Sciatic nerve (tissue), 2 donors: ENCODE measurements at regions of chr16 and their contacts with region 1.

Region 1: GRCh38 chr16:12497526-12497925 is 306.2 kb downstream of the CPPED1 start:
- DNase-seq: no peak
- ATAC-seq: peak; percentile 45

Region 2: DNA sequence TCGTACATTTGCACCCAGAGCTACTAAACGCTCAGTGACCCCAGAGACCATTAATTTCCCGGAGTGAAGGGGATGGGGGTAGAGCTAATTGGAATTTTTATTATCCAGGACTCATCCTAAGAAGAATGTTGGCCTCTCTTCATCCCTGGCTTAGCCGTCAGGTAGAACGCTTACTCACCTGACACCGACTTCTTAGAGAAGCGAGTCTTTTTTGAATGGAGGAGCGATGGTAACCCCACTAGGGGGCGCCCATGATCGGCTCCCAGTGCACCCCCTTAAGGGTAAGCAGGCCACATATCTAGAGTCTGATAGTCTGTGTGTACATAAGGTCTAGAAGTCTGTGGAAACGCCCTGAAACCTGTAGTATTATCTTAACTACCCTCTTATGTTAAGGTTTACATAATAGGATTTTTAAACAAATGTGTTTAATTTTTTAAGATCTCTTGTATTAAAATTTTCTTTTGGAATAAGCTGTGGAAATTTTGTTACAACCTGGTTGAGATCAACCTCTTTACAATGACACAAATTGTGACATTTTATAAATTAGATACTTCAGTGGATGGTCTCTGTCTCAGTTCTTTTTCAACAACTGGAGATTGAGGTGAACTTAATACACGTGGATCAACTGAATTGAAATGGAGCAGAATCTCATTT is 76.3 kb after region 1 on chr16:
- intact Hi-C with region 1: loop called (anchors 5 kb)
- DNase-seq: peak; percentile 60
- ATAC-seq: no peak